Caco-2 (cell line): ENCODE measurements at regions of chr5 and their contacts with region 1.

Region 1: DNA sequence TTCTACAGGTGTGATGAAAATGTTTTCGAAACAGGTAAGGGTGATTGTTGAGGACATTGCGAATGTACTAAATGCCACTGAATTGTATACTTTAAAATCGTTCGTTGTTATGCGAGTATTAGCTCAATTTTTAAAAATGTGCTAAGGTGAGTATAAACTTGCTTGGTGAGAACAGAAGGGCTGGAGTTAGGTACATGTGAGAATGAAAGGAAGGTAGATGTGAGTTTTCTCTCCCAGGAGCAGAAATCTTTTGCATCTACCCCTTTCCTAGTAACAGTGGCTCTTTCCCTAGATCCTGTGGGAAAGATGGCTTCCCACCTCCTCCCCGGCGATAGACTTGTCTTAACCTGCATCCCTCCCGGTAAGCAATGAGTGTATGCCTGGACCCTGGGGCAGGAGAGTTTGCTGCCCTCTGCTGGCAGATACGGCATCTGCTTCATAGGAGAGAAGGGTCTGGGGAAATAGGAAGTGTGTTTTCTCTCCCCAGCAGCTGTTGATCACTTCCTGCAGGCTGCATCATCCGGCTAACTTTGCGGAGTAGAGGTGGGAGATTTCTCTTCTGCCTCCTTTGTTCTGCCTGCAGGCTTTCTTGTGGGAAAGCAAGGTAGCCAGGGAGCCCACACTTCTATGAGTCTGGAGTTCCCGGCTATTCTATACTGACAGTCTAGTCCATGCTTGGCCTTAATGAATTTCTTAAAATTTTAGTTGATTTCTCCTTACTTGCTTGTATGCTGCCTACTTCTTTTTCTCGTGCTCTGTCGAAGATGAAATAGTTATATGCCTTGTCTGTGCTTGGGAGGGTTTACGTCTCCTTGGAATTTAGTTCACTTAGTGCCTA is 373.3 kb upstream of the SEMA6A start:
- DNase-seq: peak; percentile 80 to 83
- H3K4me3 ChIP-seq: no peak overlapping the region
- H3K4me3 Mint-ChIP-seq: no peak overlapping the region
- H3K27ac Mint-ChIP-seq: no peak overlapping the region
- H3K4me1 ChIP-seq: no peaks in the 10 kb centered on the region
- H3K4me1 Mint-ChIP-seq: no peaks in the 10 kb centered on the region
- H3K27me3 ChIP-seq: no peaks in the 10 kb centered on the region
- H3K27me3 Mint-ChIP-seq: no peaks in the 10 kb centered on the region
- CTCF ChIP-seq: peak; percentile 79 to 86

Region 2: GRCh38 chr5:116137544-116138378 is 810.1 kb before region 1 on chr5:
- CTCF ChIA-PET with region 1: no interaction called
- POLR2A ChIA-PET with region 1: no interaction called
- intact Hi-C with region 1: loop called (anchors 1 kb)
- DNase-seq: peak in 1 of 2 experiments; percentile 54
- H3K4me3 ChIP-seq: no peak overlapping the region
- H3K4me3 Mint-ChIP-seq: no peak overlapping the region
- H3K27ac Mint-ChIP-seq: no peak overlapping the region
- H3K4me1 ChIP-seq: no peaks in the 10 kb centered on the region
- H3K4me1 Mint-ChIP-seq: no peaks in the 10 kb centered on the region
- H3K27me3 ChIP-seq: no peaks in the 10 kb centered on the region
- H3K27me3 Mint-ChIP-seq: no peaks in the 10 kb centered on the region
- CTCF ChIP-seq: peak; percentile 73 to 76

Region 3: DNA sequence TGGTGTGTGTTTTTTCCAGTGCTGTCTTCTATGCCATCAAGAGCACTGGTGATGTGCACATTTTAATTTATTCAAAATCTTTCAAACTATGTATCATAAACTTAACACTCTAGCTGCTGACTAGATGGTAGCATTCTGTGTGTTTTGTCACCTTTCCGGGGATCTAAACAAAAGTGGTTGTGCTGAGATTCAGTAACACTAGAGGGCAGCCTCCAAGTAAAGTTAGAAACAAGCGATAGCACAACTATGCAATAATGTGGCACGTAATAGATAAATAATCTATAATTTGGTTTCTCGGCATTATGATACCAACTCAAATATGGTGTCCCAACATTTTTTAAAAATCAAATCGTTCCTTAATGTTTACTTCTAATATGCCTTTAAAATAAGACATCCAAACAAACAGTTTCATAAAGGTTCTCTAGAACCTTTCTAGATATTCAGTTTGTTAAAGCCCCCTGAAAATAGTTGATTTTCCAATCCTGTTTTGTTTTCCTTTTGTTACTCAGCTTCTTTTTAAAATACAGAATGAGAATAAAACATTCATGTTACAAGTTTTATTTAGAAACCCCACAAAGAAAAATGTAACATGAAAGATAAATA is 390.1 kb before region 1 on chr5:
- CTCF ChIA-PET with region 1: no interaction called
- POLR2A ChIA-PET with region 1: no interaction called
- intact Hi-C with region 1: loop called (anchors 1 kb)
- DNase-seq: peak in 1 of 2 experiments; percentile 43
- H3K4me3 ChIP-seq: no peak overlapping the region
- H3K4me3 Mint-ChIP-seq: no peak overlapping the region
- H3K27ac Mint-ChIP-seq: no peak overlapping the region
- H3K4me1 ChIP-seq: no peaks in the 10 kb centered on the region; the same call in 1 of the 2 replicates
- H3K4me1 Mint-ChIP-seq: no peaks in the 10 kb centered on the region
- H3K27me3 ChIP-seq: no peaks in the 10 kb centered on the region
- H3K27me3 Mint-ChIP-seq: no peaks in the 10 kb centered on the region
- CTCF ChIP-seq: peak; percentile 55 to 69

Region 4: GRCh38 chr5:116709082-116709481 is 238.8 kb before region 1 on chr5:
- CTCF ChIA-PET with region 1: no interaction called
- POLR2A ChIA-PET with region 1: no interaction called
- intact Hi-C with region 1: loop called (anchors 5 kb)
- DNase-seq: no peak
- H3K4me3 ChIP-seq: no peak overlapping the region
- H3K4me3 Mint-ChIP-seq: no peak overlapping the region
- H3K27ac Mint-ChIP-seq: no peak overlapping the region
- H3K4me1 ChIP-seq: no peaks in the 10 kb centered on the region
- H3K4me1 Mint-ChIP-seq: peaks cover 15% of the 10 kb centered on the region
- H3K27me3 ChIP-seq: no peaks in the 10 kb centered on the region
- H3K27me3 Mint-ChIP-seq: no peaks in the 10 kb centered on the region
- CTCF ChIP-seq: no peak

Region 5: DNA sequence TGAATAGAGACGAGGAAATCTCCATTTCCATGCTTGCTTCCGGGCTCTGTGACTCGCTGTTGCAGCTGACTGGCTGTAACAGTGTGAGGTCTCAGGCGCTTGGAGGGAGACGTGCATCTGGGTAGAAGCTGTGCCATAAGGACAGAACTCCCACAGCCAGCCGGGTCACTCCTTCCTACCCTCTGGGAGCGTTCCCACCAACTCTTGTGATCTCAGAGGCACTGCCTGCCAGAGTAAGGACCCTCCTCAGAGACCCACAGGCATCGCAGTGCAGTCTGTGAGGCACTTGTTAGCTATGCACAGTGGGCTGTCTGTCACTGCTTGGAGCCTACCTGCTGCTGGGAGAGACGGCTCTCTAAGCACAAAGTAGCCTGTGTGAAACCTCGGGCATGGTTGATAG is 169.9 kb before region 1 on chr5:
- CTCF ChIA-PET with region 1: no interaction called
- POLR2A ChIA-PET with region 1: no interaction called
- intact Hi-C with region 1: loop called (anchors 10 kb)
- DNase-seq: no peak
- H3K4me3 ChIP-seq: no peak overlapping the region
- H3K4me3 Mint-ChIP-seq: no peak overlapping the region
- H3K27ac Mint-ChIP-seq: no peak overlapping the region
- H3K4me1 ChIP-seq: no peaks in the 10 kb centered on the region
- H3K4me1 Mint-ChIP-seq: peaks cover 7% of the 10 kb centered on the region
- H3K27me3 ChIP-seq: no peaks in the 10 kb centered on the region
- H3K27me3 Mint-ChIP-seq: no peaks in the 10 kb centered on the region
- CTCF ChIP-seq: no peak